Calu3 (cell line): ENCODE measurements at regions of chr4 and their contacts with region 1.

Region 1: DNA sequence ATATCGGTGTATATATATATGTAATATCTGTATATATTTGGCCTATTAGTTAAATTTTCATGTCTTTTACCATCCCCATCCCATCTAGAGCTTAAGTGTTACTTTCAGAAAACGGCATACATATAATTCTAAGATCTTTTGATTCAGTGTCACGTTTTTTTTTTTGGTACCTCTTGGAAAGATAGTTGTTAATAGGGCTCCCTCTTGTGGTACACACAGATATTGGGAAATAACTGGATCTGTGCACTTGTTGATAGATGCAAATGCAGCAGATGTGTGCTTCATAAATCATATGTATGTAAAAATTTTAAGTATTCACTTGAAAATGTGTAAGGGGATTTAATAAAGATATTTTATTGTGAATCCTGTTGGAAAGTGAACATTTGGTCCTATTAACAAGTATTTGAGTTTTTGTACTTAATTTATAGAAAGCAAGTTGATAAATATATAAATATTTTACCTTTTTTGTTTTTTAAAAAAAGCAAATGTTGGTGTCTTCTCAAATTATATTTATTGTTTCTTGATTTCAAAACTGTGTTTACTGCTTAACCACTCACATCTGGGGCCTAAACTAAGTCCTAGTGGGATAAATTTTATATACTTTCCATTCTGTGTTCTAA is 74.7 kb downstream of the PAQR3 start:
- DNase-seq: peak; percentile 23
- H3K4me3 Mint-ChIP-seq: no peak overlapping the region
- H3K27ac Mint-ChIP-seq: no peak overlapping the region
- H3K4me1 Mint-ChIP-seq: peaks cover 8% of the 10 kb centered on the region
- H3K27me3 Mint-ChIP-seq: no peaks in the 10 kb centered on the region
- CTCF ChIP-seq: no peak

Region 2: GRCh38 chr4:77959566-77960338 is 904.8 kb before region 1 on chr4:
- CTCF ChIA-PET with region 1: no interaction called
- intact Hi-C with region 1: loop called (anchors 10 kb)
- DNase-seq: peak; percentile 18
- H3K4me3 Mint-ChIP-seq: no peak overlapping the region
- H3K27ac Mint-ChIP-seq: no peak overlapping the region
- H3K4me1 Mint-ChIP-seq: no peaks in the 10 kb centered on the region
- H3K27me3 Mint-ChIP-seq: no peaks in the 10 kb centered on the region
- CTCF ChIP-seq: peak; percentile 24

Region 3: GRCh38 chr4:78612398-78613178 is 251.9 kb before region 1 on chr4:
- CTCF ChIA-PET with region 1: no interaction called
- intact Hi-C with region 1: loop called (anchors 1 kb)
- DNase-seq: peak; percentile 17
- H3K4me3 Mint-ChIP-seq: no peak overlapping the region
- H3K27ac Mint-ChIP-seq: no peak overlapping the region
- H3K4me1 Mint-ChIP-seq: peaks cover 13% of the 10 kb centered on the region
- H3K27me3 Mint-ChIP-seq: no peaks in the 10 kb centered on the region
- CTCF ChIP-seq: peak; percentile 15

Region 4: GRCh38 chr4:78644744-78645330 is 219.7 kb before region 1 on chr4:
- CTCF ChIA-PET with region 1: interaction called, 4 read pairs
- intact Hi-C with region 1: loop called (anchors 10 kb)
- DNase-seq: peak; percentile 49
- H3K4me3 Mint-ChIP-seq: no peak overlapping the region
- H3K27ac Mint-ChIP-seq: no peak overlapping the region
- H3K4me1 Mint-ChIP-seq: peaks cover 33% of the 10 kb centered on the region
- H3K27me3 Mint-ChIP-seq: no peaks in the 10 kb centered on the region
- CTCF ChIP-seq: peak; percentile 33